ENCODE measurements at regions of chr19 and their contacts with region 1.

Region 1: GRCh38 chr19:48391107-48391986 is at the start of gene KDELR1:
- DNase-seq: peak; percentile 86
- ATAC-seq: peak; percentile 88
- H3K4me3 ChIP-seq: peak within 1 kb of the TSS; percentile 71 to 93 (median 85)
- H3K4me3 Mint-ChIP-seq: peak within 1 kb of the TSS; percentile 95
- H3K27ac ChIP-seq: peak within 1 kb of the TSS; percentile 79 to 80
- H3K27ac Mint-ChIP-seq: peak within 1 kb of the TSS; percentile 92
- H3K4me1 ChIP-seq: peaks cover 39 to 45% of the 10 kb centered on the region in 2 donors
- H3K4me1 Mint-ChIP-seq: peaks cover 24% of the 10 kb centered on the region
- H3K27me3 ChIP-seq: peaks cover 0 to 39% (median 23%) of the 10 kb centered on the region in 4 experiments
- H3K27me3 Mint-ChIP-seq: peaks cover 25% of the 10 kb centered on the region
- CTCF ChIP-seq: peak; percentile 88
- total RNA-seq, gene KDELR1: 60.5 and 62.7 TPM in 2 replicates

Region 2: DNA sequence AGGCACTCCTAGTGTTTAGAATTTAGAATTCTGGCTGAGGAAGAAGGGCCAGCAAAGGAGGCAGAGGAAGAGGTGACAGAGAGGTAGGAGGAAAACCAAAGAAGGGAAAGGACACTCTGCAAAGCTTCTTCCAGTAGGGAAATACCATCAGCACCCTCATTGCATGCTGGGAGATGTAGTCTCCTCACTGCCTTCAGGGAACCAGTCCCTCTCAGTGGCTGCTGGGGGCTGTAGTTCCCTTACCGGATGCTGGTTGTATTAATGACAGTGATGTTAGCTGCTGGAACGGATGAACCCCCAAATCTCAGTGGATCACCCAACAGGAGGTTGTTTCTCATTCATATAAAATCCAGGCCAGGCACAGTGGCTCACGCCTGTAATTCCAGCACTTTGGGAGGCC is 12.3 kb after region 1 on chr19:
- CTCF ChIA-PET with region 1: interaction called, 19 read pairs
- POLR2A ChIA-PET with region 1: no interaction called
- intact Hi-C with region 1: loop called (anchors 1 kb)
- DNase-seq: peak; percentile 68
- ATAC-seq: peak; percentile 56
- H3K4me3 ChIP-seq: no peak overlapping the region
- H3K4me3 Mint-ChIP-seq: no peak overlapping the region
- H3K27ac ChIP-seq: no peak overlapping the region
- H3K27ac Mint-ChIP-seq: peak overlapping the region; percentile 43
- H3K4me1 ChIP-seq: peaks cover 0 to 4% of the 10 kb centered on the region in 2 donors
- H3K4me1 Mint-ChIP-seq: peaks cover 14% of the 10 kb centered on the region
- H3K27me3 ChIP-seq: peaks cover 0 to 15% (median 5%) of the 10 kb centered on the region in 4 experiments
- H3K27me3 Mint-ChIP-seq: peaks cover 18% of the 10 kb centered on the region
- CTCF ChIP-seq: no peak

Region 3: GRCh38 chr19:48454150-48454730 is 62.9 kb after region 1 on chr19:
- CTCF ChIA-PET with region 1: no interaction called
- POLR2A ChIA-PET with region 1: no interaction called
- intact Hi-C with region 1: no loop called
- DNase-seq: no peak
- ATAC-seq: no peak
- H3K4me3 ChIP-seq: no peak overlapping the region
- H3K4me3 Mint-ChIP-seq: no peak overlapping the region
- H3K27ac ChIP-seq: no peak overlapping the region
- H3K27ac Mint-ChIP-seq: no peak overlapping the region
- H3K4me1 ChIP-seq: peaks cover 0 to 6% of the 10 kb centered on the region in 2 donors
- H3K4me1 Mint-ChIP-seq: peaks cover 8% of the 10 kb centered on the region
- H3K27me3 ChIP-seq: no peaks in the 10 kb centered on the region
- H3K27me3 Mint-ChIP-seq: no peaks in the 10 kb centered on the region
- CTCF ChIP-seq: no peak

Region 4: GRCh38 chr19:48468775-48469288 is 77.5 kb after region 1 on chr19:
- CTCF ChIA-PET with region 1: interaction called, 3 read pairs
- POLR2A ChIA-PET with region 1: interaction called, 3 read pairs
- intact Hi-C with region 1: loop called (anchors 2 kb)
- DNase-seq: peak; percentile 100
- ATAC-seq: peak; percentile 87
- H3K4me3 ChIP-seq: peak overlapping the region; percentile 8 to 90 (median 83)
- H3K4me3 Mint-ChIP-seq: peak overlapping the region; percentile 92
- H3K27ac ChIP-seq: peak overlapping the region; percentile 52 to 84
- H3K27ac Mint-ChIP-seq: peak overlapping the region; percentile 89
- H3K4me1 ChIP-seq: peaks cover 11 to 15% of the 10 kb centered on the region in 2 donors
- H3K4me1 Mint-ChIP-seq: peaks cover 17% of the 10 kb centered on the region
- H3K27me3 ChIP-seq: peaks cover 0 to 3% (median 0%) of the 10 kb centered on the region in 4 experiments
- H3K27me3 Mint-ChIP-seq: no peaks in the 10 kb centered on the region
- CTCF ChIP-seq: no peak